Posterior cingulate gyrus (tissue), 11 donors: ENCODE measurements at regions of chr12 and their contacts with region 1.

Region 1: DNA sequence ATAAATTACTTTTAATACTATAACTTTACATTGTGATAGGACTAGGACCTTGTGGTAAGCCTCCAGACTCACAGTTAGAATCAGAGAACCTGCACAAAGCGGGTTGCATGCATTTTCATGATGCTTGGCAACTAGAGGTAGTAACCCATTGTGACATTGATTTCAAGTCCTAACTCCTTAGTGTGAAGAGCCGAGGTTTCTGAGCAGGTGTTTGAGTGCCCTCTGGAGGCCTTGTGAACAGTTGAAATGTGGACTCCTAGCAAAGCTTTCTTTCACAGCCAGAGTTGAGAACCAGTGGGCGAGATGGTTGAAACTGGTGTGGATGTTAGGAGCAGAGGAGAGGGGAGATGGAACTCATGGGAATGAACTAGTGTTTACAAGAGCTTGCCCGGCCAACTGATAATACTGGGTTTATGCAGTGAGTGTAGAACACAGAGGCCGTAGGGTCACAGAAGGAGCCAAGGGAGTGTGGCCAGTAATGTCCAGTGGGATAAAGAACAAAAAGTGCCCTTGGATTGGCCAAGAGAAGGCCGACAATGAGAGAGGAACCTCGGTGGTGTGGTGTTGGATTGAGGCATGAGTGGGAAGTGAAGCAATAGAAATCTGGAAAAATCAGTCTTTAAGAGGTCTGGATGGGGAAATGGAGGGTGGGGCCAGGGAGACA is 10.9 kb downstream of the ZNF664 start:
- DNase-seq: peak in 3 of 10 donors; percentile 51 to 90 (median 60)

Region 2: GRCh38 chr12:123905319-123905925 is 78.5 kb before region 1 on chr12:
- intact Hi-C with region 1: loop called (anchors 1 kb)
- DNase-seq: peak in 6 of 10 donors; percentile 34 to 84 (median 62)

Region 3: DNA sequence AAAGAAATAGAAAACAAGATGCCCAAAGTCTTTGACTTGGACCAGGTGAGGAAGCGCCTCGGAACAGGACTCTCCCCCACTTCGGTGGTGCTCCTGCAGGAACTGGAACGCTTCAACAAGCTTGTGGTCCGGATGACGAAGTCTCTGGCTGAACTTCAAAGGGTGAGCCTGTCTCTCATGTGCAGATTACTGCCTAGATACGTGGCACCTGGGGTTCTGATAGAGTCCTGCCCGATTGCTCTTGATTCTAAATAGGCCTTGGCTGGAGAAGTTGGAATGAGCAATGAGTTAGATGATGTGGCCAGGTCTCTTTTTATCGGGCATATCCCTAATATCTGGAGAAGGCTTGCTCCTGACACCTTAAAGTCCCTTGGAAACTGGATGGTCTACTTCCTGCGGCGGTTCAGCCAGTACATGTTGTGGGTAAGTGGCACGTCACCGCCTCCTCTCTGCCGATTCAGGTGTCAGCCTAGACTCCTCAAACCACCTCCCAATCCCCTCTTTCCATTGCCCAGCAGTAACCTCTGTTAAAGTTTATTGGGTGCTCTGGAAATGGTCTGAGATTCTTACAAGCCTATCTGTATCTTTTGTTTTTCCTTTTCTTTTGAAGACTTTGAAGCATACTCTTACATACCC is 52.1 kb before region 1 on chr12:
- intact Hi-C with region 1: no loop called
- DNase-seq: peak in 2 of 10 donors; percentile 39 to 40